CD8-positive, alpha-beta T cell (primary cell): ENCODE measurements at regions of chr21 and their contacts with region 1.

Region 1: DNA sequence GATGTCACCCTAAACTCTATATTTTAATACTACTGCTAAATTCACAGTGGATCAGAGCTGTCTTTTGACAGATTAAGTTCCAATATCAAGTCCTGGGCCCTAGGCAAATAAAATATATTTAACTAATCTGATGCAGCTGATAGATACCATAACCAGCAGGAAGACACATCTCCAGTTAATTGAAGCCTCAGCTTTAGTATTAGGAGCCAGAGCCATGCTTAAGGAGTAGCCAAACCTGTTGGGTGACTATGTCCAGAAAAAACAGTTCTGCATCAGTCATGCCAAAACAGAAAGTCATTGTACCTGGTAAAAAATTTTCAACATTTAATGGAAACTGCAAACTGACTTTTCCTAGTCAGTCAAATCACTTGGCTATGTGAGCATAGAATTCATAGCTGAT is 200.5 kb upstream of the RUNX1 start:
- DNase-seq: no peak
- ATAC-seq: no peak
- H3K4me3 ChIP-seq: no peak overlapping the region
- H3K4me3 Mint-ChIP-seq: no peak overlapping the region
- H3K27ac ChIP-seq: no peak overlapping the region
- H3K27ac Mint-ChIP-seq: no peak overlapping the region
- H3K4me1 ChIP-seq: no peaks in the 10 kb centered on the region
- H3K4me1 Mint-ChIP-seq: no peaks in the 10 kb centered on the region
- H3K27me3 ChIP-seq: no peaks in the 10 kb centered on the region
- H3K27me3 Mint-ChIP-seq: no peaks in the 10 kb centered on the region
- CTCF ChIP-seq: no peak

Region 2: GRCh38 chr21:35198031-35198431 is 51.6 kb before region 1 on chr21:
- CTCF ChIA-PET with region 1: no interaction called
- POLR2A ChIA-PET with region 1: no interaction called
- intact Hi-C with region 1: loop called in 1 of 2 experiments (anchors 5 kb)
- DNase-seq: no peak
- ATAC-seq: no peak
- H3K4me3 ChIP-seq: no peak overlapping the region
- H3K4me3 Mint-ChIP-seq: no peak overlapping the region
- H3K27ac ChIP-seq: no peak overlapping the region
- H3K27ac Mint-ChIP-seq: no peak overlapping the region
- H3K4me1 ChIP-seq: no peaks in the 10 kb centered on the region
- H3K4me1 Mint-ChIP-seq: no peaks in the 10 kb centered on the region
- H3K27me3 ChIP-seq: no peaks in the 10 kb centered on the region
- H3K27me3 Mint-ChIP-seq: peaks cover 3% of the 10 kb centered on the region
- CTCF ChIP-seq: no peak

Region 3: GRCh38 chr21:35475768-35476167 is 226.2 kb after region 1 on chr21:
- CTCF ChIA-PET with region 1: no interaction called
- POLR2A ChIA-PET with region 1: no interaction called
- intact Hi-C with region 1: no loop called
- DNase-seq: peak in 1 of 9 experiments; percentile 13
- ATAC-seq: peak; percentile 29
- H3K4me3 ChIP-seq: no peak overlapping the region
- H3K4me3 Mint-ChIP-seq: peak overlapping the region; percentile 6
- H3K27ac ChIP-seq: no peak overlapping the region
- H3K27ac Mint-ChIP-seq: peak overlapping the region; percentile 2
- H3K4me1 ChIP-seq: peaks cover 25% of the 10 kb centered on the region
- H3K4me1 Mint-ChIP-seq: peaks cover 18% of the 10 kb centered on the region
- H3K27me3 ChIP-seq: no peaks in the 10 kb centered on the region
- H3K27me3 Mint-ChIP-seq: peaks cover 2% of the 10 kb centered on the region
- CTCF ChIP-seq: no peak